MCF 10A (cell line): ENCODE measurements at regions of chr16 and their contacts with region 1.

Region 1: GRCh38 chr16:46853713-46854443 is 22.9 kb upstream of the C16orf87 start:
- DNase-seq: peak; percentile 79
- H3K4me3 Mint-ChIP-seq: no peak overlapping the region
- H3K27ac Mint-ChIP-seq: no peak overlapping the region
- H3K4me1 Mint-ChIP-seq: no peaks in the 10 kb centered on the region
- H3K27me3 Mint-ChIP-seq: no peaks in the 10 kb centered on the region
- CTCF ChIP-seq: peak; percentile 95

Region 2: GRCh38 chr16:46757339-46758050 is 96.4 kb before region 1 on chr16:
- CTCF ChIA-PET with region 1: no interaction called
- POLR2A ChIA-PET with region 1: no interaction called
- intact Hi-C with region 1: no loop called
- DNase-seq: peak; percentile 12
- H3K4me3 Mint-ChIP-seq: no peak overlapping the region
- H3K27ac Mint-ChIP-seq: no peak overlapping the region
- H3K4me1 Mint-ChIP-seq: no peaks in the 10 kb centered on the region
- H3K27me3 Mint-ChIP-seq: peaks cover 34% of the 10 kb centered on the region
- CTCF ChIP-seq: no peak

Region 3: DNA sequence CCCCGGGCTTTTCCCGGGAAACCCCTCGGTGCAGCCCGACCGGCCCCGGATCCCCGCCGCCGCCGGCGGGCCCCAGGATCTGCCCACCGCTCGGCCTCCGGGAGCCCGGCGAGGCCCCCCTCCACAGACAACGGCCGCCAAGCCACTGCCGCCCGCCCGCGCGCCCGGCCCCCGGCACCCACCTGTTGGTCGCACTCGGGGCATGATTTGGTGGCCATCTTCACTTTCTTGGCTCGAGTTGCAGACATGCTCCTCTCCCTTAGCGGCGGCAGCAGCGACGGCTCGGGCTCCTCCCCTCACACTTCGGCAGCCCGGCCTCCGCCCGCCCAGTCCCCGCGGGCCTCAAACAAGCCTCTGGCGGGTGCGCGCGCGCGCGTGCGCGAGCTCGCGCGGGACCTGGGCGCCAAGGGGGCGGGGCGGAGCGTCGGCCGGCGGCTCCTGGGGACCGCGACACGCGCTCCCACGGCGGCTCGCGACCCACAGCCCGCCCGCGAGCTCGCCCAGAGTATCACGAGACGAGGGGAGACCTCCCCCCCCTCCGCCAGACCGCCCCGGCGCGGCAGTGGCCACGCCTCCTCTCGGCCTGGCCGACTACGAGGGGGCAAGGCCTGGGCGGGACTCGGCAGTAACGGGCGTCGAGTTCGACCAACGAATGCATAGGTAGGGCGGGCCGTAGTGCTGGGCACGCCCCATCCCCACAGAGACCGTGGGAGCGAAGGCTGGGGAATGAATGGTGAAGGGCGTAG is 22.8 kb before region 1 on chr16 and contains the start of gene C16orf87:
- CTCF ChIA-PET with region 1: interaction called, 11 read pairs
- POLR2A ChIA-PET with region 1: interaction called, 4 read pairs
- intact Hi-C with region 1: no loop called
- DNase-seq: peak; percentile 89
- H3K4me3 Mint-ChIP-seq: peak within 1 kb of the TSS; percentile 85
- H3K27ac Mint-ChIP-seq: peak within 1 kb of the TSS; percentile 83
- H3K4me1 Mint-ChIP-seq: peaks cover 18% of the 10 kb centered on the region
- H3K27me3 Mint-ChIP-seq: no peaks in the 10 kb centered on the region
- CTCF ChIP-seq: no peak
- total RNA-seq, gene C16orf87: 11.5 and 13.5 TPM in 2 replicates

Region 4: GRCh38 chr16:46883690-46884512 is 30.0 kb after region 1 on chr16 and contains the start of gene GPT2:
- CTCF ChIA-PET with region 1: interaction called, 59 read pairs
- POLR2A ChIA-PET with region 1: interaction called, 10 read pairs
- intact Hi-C with region 1: loop called (anchors 2 kb)
- DNase-seq: peak; percentile 97
- H3K4me3 Mint-ChIP-seq: peak within 1 kb of the TSS; percentile 73
- H3K27ac Mint-ChIP-seq: peak within 1 kb of the TSS; percentile 90
- H3K4me1 Mint-ChIP-seq: peaks cover 26% of the 10 kb centered on the region
- H3K27me3 Mint-ChIP-seq: no peaks in the 10 kb centered on the region
- CTCF ChIP-seq: peak; percentile 24
- total RNA-seq, gene GPT2: 44.7 and 60.6 TPM in 2 replicates

Region 5: GRCh38 chr16:46908540-46909372 is 54.9 kb after region 1 on chr16:
- CTCF ChIA-PET with region 1: interaction called, 287 read pairs
- POLR2A ChIA-PET with region 1: interaction called, 7 read pairs
- intact Hi-C with region 1: loop called (anchors 1 kb)
- DNase-seq: peak; percentile 70
- H3K4me3 Mint-ChIP-seq: no peak overlapping the region
- H3K27ac Mint-ChIP-seq: no peak overlapping the region
- H3K4me1 Mint-ChIP-seq: no peaks in the 10 kb centered on the region
- H3K27me3 Mint-ChIP-seq: no peaks in the 10 kb centered on the region
- CTCF ChIP-seq: peak; percentile 49

Region 6: GRCh38 chr16:46924402-46924801 is 70.5 kb after region 1 on chr16:
- CTCF ChIA-PET with region 1: interaction called, 87 read pairs
- POLR2A ChIA-PET with region 1: no interaction called
- intact Hi-C with region 1: loop called (anchors 1 kb)
- DNase-seq: no peak
- H3K4me3 Mint-ChIP-seq: no peak overlapping the region
- H3K27ac Mint-ChIP-seq: peak overlapping the region; percentile 19
- H3K4me1 Mint-ChIP-seq: no peaks in the 10 kb centered on the region
- H3K27me3 Mint-ChIP-seq: no peaks in the 10 kb centered on the region
- CTCF ChIP-seq: no peak

Region 7: DNA sequence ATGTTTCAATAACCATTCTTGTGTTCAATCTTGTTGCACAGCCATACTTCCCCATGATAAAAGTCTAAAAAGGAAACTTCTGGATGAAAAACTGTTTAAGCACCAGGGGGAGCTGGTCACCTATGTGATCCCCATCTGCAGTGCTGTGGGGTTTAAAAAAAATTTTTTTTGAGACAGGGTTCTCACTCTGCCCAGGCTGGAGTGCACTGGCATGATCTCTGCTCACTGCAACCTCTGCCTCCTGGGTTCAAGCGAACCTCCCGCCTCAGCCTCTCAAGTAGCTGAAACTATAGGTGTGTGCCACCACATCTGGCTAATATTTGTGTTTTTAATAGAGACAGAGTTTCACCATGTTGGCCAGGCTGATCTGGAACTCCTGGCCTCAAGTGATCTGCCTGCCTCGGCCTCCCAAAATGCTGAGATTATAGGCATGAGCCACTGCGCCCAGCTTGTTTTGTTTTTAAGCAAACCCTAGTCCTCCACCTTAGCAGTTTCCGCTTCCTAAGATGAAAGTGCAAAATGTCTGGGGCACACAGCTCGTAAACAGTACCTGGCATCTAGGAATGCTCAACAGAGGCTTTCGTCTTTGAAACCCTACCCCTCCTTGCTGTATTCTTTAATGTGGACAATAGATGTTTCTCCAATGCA is 94.1 kb after region 1 on chr16:
- CTCF ChIA-PET with region 1: interaction called, 12 read pairs
- POLR2A ChIA-PET with region 1: no interaction called
- intact Hi-C with region 1: no loop called
- DNase-seq: peak; percentile 57
- H3K4me3 Mint-ChIP-seq: no peak overlapping the region
- H3K27ac Mint-ChIP-seq: no peak overlapping the region
- H3K4me1 Mint-ChIP-seq: no peaks in the 10 kb centered on the region
- H3K27me3 Mint-ChIP-seq: no peaks in the 10 kb centered on the region
- CTCF ChIP-seq: peak; percentile 61

Region 8: GRCh38 chr16:48164907-48165726 is 1311.2 kb after region 1 on chr16:
- CTCF ChIA-PET with region 1: interaction called, 7 read pairs
- POLR2A ChIA-PET with region 1: no interaction called
- intact Hi-C with region 1: loop called (anchors 10 kb)
- DNase-seq: peak; percentile 78
- H3K4me3 Mint-ChIP-seq: peak overlapping the region; percentile 2
- H3K27ac Mint-ChIP-seq: no peak overlapping the region
- H3K4me1 Mint-ChIP-seq: peaks cover 5% of the 10 kb centered on the region
- H3K27me3 Mint-ChIP-seq: no peaks in the 10 kb centered on the region
- CTCF ChIP-seq: peak; percentile 85